Activated B cell treated with CpG ODN at 0.5 μM for 24 hours (primary cell): ENCODE measurements at regions of chr5 and their contacts with region 1.

Region 1: DNA sequence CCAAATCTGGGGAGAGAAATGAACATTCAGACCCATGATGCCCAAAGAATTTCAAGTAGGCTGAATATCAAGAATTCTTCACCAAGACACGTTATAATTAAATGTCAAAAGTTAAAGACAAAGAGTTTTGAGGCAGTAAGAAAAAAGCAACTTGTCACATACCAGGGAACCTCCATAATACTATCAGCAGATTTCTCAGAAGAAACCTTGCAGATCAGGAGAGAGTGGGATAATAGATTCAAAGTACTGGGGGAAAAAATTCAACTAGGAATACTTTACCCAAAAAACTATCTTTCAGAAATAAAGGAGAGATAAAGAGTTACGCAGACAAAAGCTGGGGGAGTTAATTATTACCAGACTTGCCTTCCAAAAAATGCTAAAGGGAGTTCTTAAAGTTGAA is 516.0 kb downstream of the CETN3 start:
- DNase-seq: no peak
- ATAC-seq: no peak
- H3K4me3 Mint-ChIP-seq: no peak overlapping the region
- H3K27ac Mint-ChIP-seq: no peak overlapping the region
- H3K4me1 Mint-ChIP-seq: no peaks in the 10 kb centered on the region
- H3K27me3 Mint-ChIP-seq: peaks cover 2% of the 10 kb centered on the region
- CTCF ChIP-seq: no peak

Region 2: GRCh38 chr5:89374144-89374784 is 519.3 kb before region 1 on chr5:
- CTCF ChIA-PET with region 1: no interaction called
- POLR2A ChIA-PET with region 1: no interaction called
- intact Hi-C with region 1: no loop called
- DNase-seq: no peak
- ATAC-seq: no peak
- H3K4me3 Mint-ChIP-seq: peak overlapping the region; percentile 51
- H3K27ac Mint-ChIP-seq: peak overlapping the region; percentile 31
- H3K4me1 Mint-ChIP-seq: peaks cover 21% of the 10 kb centered on the region
- H3K27me3 Mint-ChIP-seq: no peaks in the 10 kb centered on the region
- CTCF ChIP-seq: no peak

Region 3: DNA sequence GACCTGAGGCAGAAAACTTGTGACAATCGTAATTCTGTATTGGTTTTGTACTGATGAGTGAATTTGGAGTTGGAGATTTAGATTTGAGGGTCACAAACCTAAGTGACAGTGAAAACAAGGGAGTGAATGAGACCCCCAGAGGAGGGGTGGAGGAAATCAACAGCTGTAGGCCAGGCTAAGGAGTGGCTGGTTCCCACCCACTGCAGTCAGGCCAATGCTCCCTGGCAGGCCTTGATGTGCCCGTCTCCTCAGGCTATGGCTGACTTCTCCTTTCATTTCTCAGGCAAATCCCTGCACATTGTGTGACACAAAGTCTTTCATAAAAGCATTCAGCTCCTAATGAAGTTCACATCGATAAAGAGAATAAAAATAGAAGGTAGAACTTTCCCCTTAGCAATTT is 41.6 kb before region 1 on chr5:
- CTCF ChIA-PET with region 1: no interaction called
- POLR2A ChIA-PET with region 1: no interaction called
- intact Hi-C with region 1: no loop called
- DNase-seq: no peak
- ATAC-seq: no peak
- H3K4me3 Mint-ChIP-seq: no peak overlapping the region
- H3K27ac Mint-ChIP-seq: no peak overlapping the region
- H3K4me1 Mint-ChIP-seq: peaks cover 7% of the 10 kb centered on the region
- H3K27me3 Mint-ChIP-seq: no peaks in the 10 kb centered on the region
- CTCF ChIP-seq: no peak

Region 4: GRCh38 chr5:89878140-89879132 is 15.1 kb before region 1 on chr5:
- CTCF ChIA-PET with region 1: no interaction called
- POLR2A ChIA-PET with region 1: no interaction called
- intact Hi-C with region 1: loop called (anchors 2 kb)
- DNase-seq: no peak
- ATAC-seq: no peak
- H3K4me3 Mint-ChIP-seq: no peak overlapping the region
- H3K27ac Mint-ChIP-seq: no peak overlapping the region
- H3K4me1 Mint-ChIP-seq: no peaks in the 10 kb centered on the region
- H3K27me3 Mint-ChIP-seq: no peaks in the 10 kb centered on the region
- CTCF ChIP-seq: no peak

Region 5: DNA sequence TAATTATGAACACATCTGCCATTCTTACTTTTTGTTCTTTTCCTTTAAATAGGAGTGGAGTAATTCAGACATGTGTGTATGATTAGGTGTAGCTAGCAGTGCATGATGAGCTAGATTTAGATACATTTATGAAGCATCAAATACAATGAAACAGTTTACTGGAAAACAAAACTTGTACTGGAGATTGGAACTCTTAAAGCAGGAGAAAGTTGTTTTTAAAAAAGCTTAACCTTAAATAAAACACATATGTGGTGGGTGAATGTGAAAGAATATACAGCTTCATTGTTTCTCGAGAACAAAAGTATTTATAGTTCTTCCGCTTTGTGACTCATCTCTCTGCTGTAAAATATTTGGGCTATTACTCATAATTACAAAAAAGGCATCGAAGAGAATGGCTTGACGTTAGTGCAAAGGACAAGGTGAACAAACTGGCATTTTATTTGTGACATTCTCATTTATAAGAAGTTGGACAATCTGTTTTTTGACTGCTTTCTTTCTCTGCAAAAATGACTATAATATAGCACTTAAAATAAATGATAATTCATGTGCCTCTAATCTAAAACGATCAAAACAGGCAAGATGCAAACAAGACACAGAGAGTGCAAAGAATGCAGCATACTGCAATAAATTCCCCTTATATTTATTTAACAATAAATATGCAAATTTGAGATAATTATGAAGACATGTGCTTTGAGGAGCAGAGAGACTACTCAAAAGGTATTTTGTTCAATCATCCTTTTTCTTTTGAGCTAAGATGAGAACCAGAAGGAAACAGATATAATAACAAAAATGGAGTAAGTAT is 37.2 kb after region 1 on chr5:
- CTCF ChIA-PET with region 1: no interaction called
- POLR2A ChIA-PET with region 1: no interaction called
- intact Hi-C with region 1: no loop called
- DNase-seq: no peak
- ATAC-seq: peak; percentile 25
- H3K4me3 Mint-ChIP-seq: peak overlapping the region; percentile 28
- H3K27ac Mint-ChIP-seq: peak overlapping the region; percentile 54
- H3K4me1 Mint-ChIP-seq: peaks cover 45% of the 10 kb centered on the region
- H3K27me3 Mint-ChIP-seq: no peaks in the 10 kb centered on the region
- CTCF ChIP-seq: no peak